Mammary epithelial cell (primary cell): ENCODE measurements at regions of chr10 and their contacts with region 1.

Region 1: DNA sequence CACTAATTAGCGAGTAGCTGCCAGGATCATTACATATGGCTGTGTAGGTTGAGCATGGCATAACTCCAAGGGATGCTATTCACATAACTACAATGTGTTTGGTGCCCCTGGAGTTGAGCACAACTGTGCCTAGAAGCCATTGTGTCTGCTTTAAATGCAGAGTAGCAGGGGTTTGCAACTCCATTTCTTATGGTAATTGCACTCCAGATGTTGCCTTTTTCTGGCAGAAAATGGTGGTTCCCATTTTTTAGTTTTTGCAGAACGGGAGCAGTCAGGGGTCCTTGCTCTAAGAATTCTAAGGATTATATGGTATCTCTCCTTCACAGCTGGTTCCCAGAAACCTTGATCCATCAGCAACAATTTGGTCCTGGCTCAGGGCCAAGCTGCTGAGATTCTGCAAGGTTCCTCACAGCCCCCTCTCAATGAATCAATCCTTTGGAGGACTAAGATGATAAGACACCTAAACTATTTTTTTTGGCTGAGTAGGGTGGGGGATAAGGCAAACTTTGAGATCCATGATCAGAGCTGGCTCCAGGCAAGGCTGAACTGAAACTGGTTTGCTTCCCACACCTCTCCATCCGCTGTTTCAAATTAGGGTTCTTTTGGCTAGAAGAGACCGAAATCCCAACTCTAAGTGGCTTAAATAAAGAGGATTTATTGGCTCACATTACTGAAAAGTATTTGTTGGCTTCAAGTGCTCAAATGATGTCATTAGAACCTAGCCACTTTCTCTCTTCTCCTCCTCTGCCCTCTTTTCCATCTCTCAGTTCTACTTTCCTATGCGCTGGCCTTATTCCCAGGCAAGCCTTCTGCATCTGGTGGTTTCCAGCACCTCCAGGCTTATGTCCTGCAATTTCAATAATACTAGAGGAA is 97.5 kb upstream of the CCDC6 start:
- DNase-seq: no peak
- H3K4me3 ChIP-seq: no peak overlapping the region
- H3K27ac ChIP-seq: no peak overlapping the region
- H3K4me1 ChIP-seq: no peaks in the 10 kb centered on the region
- H3K27me3 ChIP-seq: no peaks in the 10 kb centered on the region
- CTCF ChIP-seq: no peak

Region 2: DNA sequence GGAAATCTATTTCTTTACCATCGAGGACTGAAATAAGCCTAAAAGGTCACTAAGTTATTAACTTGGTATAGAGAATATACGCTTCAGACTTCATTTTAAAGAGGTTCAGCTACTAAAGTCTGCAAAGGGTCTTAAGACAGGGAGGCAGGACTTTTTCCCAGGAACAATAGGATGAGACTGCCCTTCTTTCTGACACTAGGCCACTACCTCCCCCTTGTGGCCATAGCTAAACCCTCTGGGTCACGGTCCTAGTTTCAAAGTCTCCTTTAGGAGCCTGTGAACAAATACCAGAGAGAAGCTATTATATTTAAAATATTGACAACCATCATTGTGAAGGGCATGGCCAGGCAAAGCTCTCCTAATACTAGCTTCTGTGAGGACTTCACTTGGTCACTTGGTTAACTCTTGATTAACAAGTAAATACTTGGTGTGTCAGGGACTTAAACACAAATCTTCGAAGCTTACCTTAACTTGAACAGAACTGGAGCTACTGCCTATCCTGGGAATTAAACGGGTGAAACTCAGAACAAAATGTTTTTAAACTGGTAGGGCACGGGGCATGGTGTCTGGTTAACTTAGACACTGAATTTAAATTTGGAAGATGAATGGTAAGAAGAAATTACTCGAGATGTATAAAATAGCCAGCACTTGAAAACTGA is 173.2 kb before region 1 on chr10:
- CTCF ChIA-PET with region 1: no interaction called
- dilution Hi-C with region 1: loop called (anchors 25 kb)
- in situ Hi-C with region 1: no loop called
- intact Hi-C with region 1: no loop called
- DNase-seq: peak; percentile 12
- H3K4me3 ChIP-seq: no peak overlapping the region
- H3K27ac ChIP-seq: no peak overlapping the region
- H3K4me1 ChIP-seq: no peaks in the 10 kb centered on the region
- H3K27me3 ChIP-seq: no peaks in the 10 kb centered on the region
- CTCF ChIP-seq: peak; percentile 82 to 85